ENCODE measurements at regions of chr19 and their contacts with region 1.

Region 1: GRCh38 chr19:40465557-40466150 is at the start of gene BLVRB:
- DNase-seq: peak; percentile 100
- H3K4me3 ChIP-seq: peak within 1 kb of the TSS; percentile 14 to 69 (median 49)
- H3K27ac ChIP-seq: peak within 1 kb of the TSS; percentile 47
- H3K4me1 ChIP-seq: peaks cover 14% of the 10 kb centered on the region
- H3K27me3 ChIP-seq: peaks cover 2 to 5% of the 10 kb centered on the region in 2 experiments
- CTCF ChIP-seq: no peak
- POLR2A ChIP-seq: no peak
- total RNA-seq, gene BLVRB: 30.8 and 35.8 TPM in 2 replicates

Region 2: DNA sequence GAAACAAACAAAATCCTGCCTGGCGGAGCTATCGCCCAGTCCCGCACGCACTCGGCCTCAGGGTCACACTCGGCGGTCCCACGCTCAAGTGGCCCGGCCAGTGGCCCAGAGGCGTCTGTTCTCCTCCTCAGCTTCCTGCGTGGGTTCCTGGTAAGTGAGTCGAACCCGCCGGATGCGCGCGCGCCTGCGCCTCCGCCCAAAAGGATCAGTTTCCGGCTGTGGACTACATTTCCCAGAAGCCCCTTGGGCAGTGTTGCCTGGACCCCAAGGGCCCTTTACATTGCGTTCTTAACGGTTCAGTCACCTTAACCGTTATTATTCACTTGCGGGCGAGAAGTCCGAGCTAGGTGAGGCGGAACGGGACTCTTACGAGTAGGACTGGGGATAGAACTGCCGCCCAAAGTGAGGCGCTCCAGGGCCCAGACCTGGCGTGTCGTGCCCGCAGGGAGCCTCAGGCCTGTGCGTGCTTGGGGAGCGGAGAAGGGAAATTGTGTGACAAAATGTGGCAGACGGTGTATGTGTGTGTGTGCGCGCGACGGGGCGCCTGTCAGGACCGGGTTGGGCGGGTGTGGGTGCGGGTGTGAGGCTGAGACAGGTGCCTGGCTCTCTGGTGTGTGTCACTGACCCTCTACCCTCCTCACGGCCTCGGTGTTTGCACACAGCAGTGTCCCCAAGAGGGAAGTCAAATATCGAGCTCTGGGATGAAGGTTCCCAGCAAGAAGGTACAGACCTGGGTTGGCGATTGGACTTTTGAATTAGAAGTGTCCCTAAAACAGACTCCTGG is 468.7 kb before region 1 on chr19 and contains the start of gene ZNF546:
- CTCF ChIA-PET with region 1: no interaction called
- POLR2A ChIA-PET with region 1: no interaction called
- dilution Hi-C with region 1: no loop called
- intact Hi-C with region 1: no loop called
- DNase-seq: peak; percentile 95
- H3K4me3 ChIP-seq: peak within 1 kb of the TSS; percentile 42 to 76 (median 70)
- H3K27ac ChIP-seq: peak within 1 kb of the TSS; percentile 74
- H3K4me1 ChIP-seq: peaks cover 11% of the 10 kb centered on the region
- H3K27me3 ChIP-seq: no peaks in the 10 kb centered on the region
- CTCF ChIP-seq: no peak
- POLR2A ChIP-seq: peak; percentile 97
- total RNA-seq, gene ZNF546: 4.3 and 4.4 TPM in 2 replicates

Region 3: GRCh38 chr19:40285353-40286234 is 180.1 kb before region 1 on chr19:
- CTCF ChIA-PET with region 1: no interaction called
- POLR2A ChIA-PET with region 1: no interaction called
- dilution Hi-C with region 1: no loop called
- intact Hi-C with region 1: loop called (anchors 1 kb)
- DNase-seq: peak; percentile 100
- H3K4me3 ChIP-seq: peak overlapping the region in 2 of 3 experiments; percentile 40 to 86
- H3K27ac ChIP-seq: peak overlapping the region; percentile 76
- H3K4me1 ChIP-seq: peaks cover 11% of the 10 kb centered on the region
- H3K27me3 ChIP-seq: no peaks in the 10 kb centered on the region
- CTCF ChIP-seq: no peak
- POLR2A ChIP-seq: peak; percentile 43

Region 4: GRCh38 chr19:40411125-40411842 is 54.4 kb before region 1 on chr19:
- CTCF ChIA-PET with region 1: no interaction called
- POLR2A ChIA-PET with region 1: no interaction called
- dilution Hi-C with region 1: no loop called
- intact Hi-C with region 1: no loop called
- DNase-seq: no peak
- H3K4me3 ChIP-seq: no peak overlapping the region
- H3K27ac ChIP-seq: no peak overlapping the region
- H3K4me1 ChIP-seq: no peaks in the 10 kb centered on the region
- H3K27me3 ChIP-seq: no peaks in the 10 kb centered on the region
- CTCF ChIP-seq: no peak
- POLR2A ChIP-seq: no peak

Region 5: GRCh38 chr19:40425450-40426287 is 40.0 kb before region 1 on chr19 and contains the start of gene SERTAD1:
- CTCF ChIA-PET with region 1: interaction called, 43 read pairs
- POLR2A ChIA-PET with region 1: interaction called, 11 read pairs
- dilution Hi-C with region 1: no loop called
- intact Hi-C with region 1: loop called (anchors 1 kb)
- DNase-seq: peak; percentile 99
- H3K4me3 ChIP-seq: peak within 1 kb of the TSS; percentile 80 to 95 (median 93)
- H3K27ac ChIP-seq: peak within 1 kb of the TSS; percentile 95
- H3K4me1 ChIP-seq: peaks cover 19% of the 10 kb centered on the region
- H3K27me3 ChIP-seq: no peaks in the 10 kb centered on the region
- CTCF ChIP-seq: peak; percentile 40 to 74
- POLR2A ChIP-seq: peak; percentile 99
- total RNA-seq, gene SERTAD1: 8.8 and 10.0 TPM in 2 replicates

Region 6: GRCh38 chr19:40452016-40452415 is 13.6 kb before region 1 on chr19:
- CTCF ChIA-PET with region 1: interaction called, 36 read pairs
- POLR2A ChIA-PET with region 1: interaction called, 3 read pairs
- dilution Hi-C with region 1: no loop called
- intact Hi-C with region 1: no loop called
- DNase-seq: no peak
- H3K4me3 ChIP-seq: no peak overlapping the region
- H3K27ac ChIP-seq: no peak overlapping the region
- H3K4me1 ChIP-seq: no peaks in the 10 kb centered on the region
- H3K27me3 ChIP-seq: no peaks in the 10 kb centered on the region
- CTCF ChIP-seq: no peak
- POLR2A ChIP-seq: no peak

Region 7: GRCh38 chr19:40603389-40604135 is 137.9 kb after region 1 on chr19:
- CTCF ChIA-PET with region 1: interaction called, 44 read pairs
- POLR2A ChIA-PET with region 1: no interaction called
- dilution Hi-C with region 1: no loop called
- intact Hi-C with region 1: loop called (anchors 1 kb)
- DNase-seq: peak; percentile 96
- H3K4me3 ChIP-seq: peak overlapping the region in 2 of 3 experiments; percentile 12 to 45
- H3K27ac ChIP-seq: no peak overlapping the region
- H3K4me1 ChIP-seq: peaks cover 45% of the 10 kb centered on the region
- H3K27me3 ChIP-seq: peaks cover 4 to 6% of the 10 kb centered on the region in 2 experiments
- CTCF ChIP-seq: no peak
- POLR2A ChIP-seq: no peak